ENCODE measurements at regions of chr3 and their contacts with region 1.

Region 1: DNA sequence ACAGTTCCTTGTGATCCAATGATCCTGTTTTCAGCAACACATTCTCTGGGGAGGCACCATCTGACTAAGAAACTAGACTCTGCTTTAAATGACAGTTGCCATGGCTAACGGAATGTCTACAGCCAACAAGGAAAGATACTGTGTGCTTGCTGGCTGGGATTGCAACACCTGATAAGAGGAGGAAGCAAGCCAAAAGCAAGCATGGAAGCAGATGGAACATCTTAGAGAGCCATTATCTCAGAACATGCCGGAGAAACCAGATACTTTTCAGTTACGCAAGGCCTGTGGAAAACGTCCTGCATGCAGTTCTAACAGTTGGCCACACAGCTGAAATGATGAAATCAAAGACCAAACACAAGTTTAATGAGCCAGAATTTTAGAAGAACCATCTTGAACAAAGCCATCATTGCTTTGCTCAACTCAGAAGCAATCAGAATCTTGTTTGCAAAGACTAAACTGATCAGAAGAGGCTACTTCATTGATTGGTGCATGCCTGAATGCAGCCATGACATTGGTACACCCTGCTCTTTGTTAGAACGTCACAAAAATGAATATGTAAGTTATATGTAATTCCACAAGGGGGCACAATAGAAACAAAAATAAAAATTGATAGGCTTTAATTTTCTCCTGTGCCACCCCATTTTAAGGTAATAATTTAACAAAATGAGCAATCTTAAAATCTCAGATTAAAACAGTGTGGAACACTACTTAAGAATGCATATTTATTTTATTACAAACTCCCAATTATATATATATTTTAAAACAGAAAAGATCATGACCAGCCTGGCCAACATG is 50.8 kb downstream of the GXYLT2 start:
- DNase-seq: peak in 5 of 9 experiments; percentile 4 to 70 (median 40)
- ATAC-seq: peak; percentile 100
- H3K4me3 ChIP-seq: no peak overlapping the region
- H3K4me3 Mint-ChIP-seq: no peak overlapping the region
- H3K27ac ChIP-seq: no peak overlapping the region
- H3K27ac Mint-ChIP-seq: no peak overlapping the region
- H3K4me1 ChIP-seq: no peaks in the 10 kb centered on the region
- H3K4me1 Mint-ChIP-seq: no peaks in the 10 kb centered on the region
- H3K27me3 ChIP-seq: no peaks in the 10 kb centered on the region
- H3K27me3 Mint-ChIP-seq: no peaks in the 10 kb centered on the region
- CTCF ChIP-seq: peak; percentile 64

Region 2: GRCh38 chr3:72847751-72848702 is 90.6 kb before region 1 on chr3 and contains the start of gene SHQ1:
- CTCF ChIA-PET with region 1: no interaction called
- POLR2A ChIA-PET with region 1: no interaction called
- intact Hi-C with region 1: loop called in 1 of 2 experiments (anchors 5 kb)
- DNase-seq: peak; percentile 84 to 98 (median 95)
- ATAC-seq: peak; percentile 90
- H3K4me3 ChIP-seq: peak within 1 kb of the TSS; percentile 64 to 92
- H3K4me3 Mint-ChIP-seq: peak within 1 kb of the TSS; percentile 95
- H3K27ac ChIP-seq: peak within 1 kb of the TSS; percentile 16 to 51
- H3K27ac Mint-ChIP-seq: peak within 1 kb of the TSS; percentile 80
- H3K4me1 ChIP-seq: peaks cover 23% of the 10 kb centered on the region
- H3K4me1 Mint-ChIP-seq: peaks cover 53% of the 10 kb centered on the region
- H3K27me3 ChIP-seq: no peaks in the 10 kb centered on the region
- H3K27me3 Mint-ChIP-seq: no peaks in the 10 kb centered on the region
- CTCF ChIP-seq: no peak
- total RNA-seq, gene SHQ1: 7.1 to 11.3 TPM

Measured in CD8-positive, alpha-beta T cell (primary cell).